ENCODE measurements at regions of chr21 and their contacts with region 1.

Region 1: DNA sequence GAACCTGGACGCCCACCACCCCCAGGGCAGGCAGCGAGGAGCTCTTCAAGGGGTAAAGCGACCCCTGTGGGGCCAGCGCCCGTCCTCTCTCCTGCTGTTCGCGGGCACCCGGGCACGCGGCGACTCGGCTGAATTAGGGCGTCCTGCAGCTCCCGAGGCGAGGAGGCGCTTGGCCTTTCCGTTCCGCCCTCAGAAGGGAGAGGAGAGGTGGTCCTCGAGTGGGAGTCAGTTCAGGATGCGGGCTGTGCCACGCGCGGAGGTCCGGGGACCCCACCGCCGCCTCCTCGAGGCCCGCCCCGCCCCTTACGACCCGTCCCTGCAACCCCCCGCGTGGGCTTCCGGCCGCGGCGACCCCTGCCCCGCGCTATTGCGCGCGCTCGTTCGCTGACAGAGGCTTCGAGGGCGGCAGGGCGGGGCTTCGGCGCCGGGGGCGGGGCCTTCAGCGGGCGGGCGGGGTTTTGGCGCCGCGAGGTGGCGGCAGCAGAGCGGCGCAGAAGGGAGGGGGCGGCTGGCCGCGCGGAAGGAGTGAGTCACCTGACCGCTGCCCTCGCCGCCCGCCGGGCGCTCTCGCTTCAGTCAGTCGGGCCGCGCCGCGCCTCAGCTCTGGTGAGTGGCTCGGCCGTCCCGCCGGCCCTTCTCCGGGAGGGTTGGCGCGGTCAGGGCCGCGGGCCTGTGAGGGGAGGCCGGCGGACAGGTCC is at the start of gene BACH1:
- DNase-seq: peak; percentile 83
- H3K4me3 ChIP-seq: peak within 1 kb of the TSS; percentile 57 to 78 (median 74)
- H3K27ac ChIP-seq: peak within 1 kb of the TSS; percentile 89
- H3K4me1 ChIP-seq: peaks cover 37% of the 10 kb centered on the region
- H3K27me3 ChIP-seq: no peaks in the 10 kb centered on the region
- CTCF ChIP-seq: peak; percentile 22 to 53
- total RNA-seq, gene BACH1: 38.8 to 45.7 TPM

Region 2: DNA sequence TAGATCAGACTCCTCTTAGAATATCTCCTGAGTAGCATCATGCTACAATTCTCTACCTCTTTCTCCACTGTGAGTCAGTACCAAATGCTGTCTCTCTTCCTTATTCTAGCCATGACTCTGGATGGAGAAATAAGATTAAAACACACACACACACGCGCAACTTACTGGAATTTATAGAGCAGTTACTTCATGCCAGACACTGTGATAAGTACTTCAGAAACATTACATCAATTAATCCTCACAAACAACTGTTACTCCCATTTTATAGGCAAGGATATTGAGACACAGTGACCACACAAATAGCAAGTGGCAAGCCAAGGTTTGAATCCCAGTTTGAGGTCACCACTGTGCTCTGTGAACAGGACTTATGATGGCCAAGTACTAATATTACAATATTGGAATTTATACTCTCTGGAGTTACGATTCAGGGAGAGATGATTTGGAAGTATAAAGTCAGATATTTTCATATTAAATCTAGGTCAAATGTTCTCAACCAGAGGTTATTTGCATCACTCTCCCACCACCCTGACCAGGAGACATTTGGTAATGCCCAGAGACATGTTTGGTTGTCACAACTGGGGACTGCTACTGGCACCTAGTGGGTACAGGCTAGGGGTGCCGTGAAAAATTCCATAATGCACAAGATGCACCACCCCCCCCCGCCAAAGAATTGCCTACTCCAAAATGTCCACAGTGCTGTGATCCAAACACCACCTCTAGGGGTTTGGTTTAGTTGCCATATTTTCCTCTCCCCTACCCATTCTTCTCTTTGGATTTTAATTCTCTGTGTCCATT is 527.4 kb before region 1 on chr21:
- CTCF ChIA-PET with region 1: no interaction called
- dilution Hi-C with region 1: no loop called
- in situ Hi-C with region 1: no loop called
- intact Hi-C with region 1: no loop called
- DNase-seq: no peak
- H3K4me3 ChIP-seq: no peak overlapping the region
- H3K27ac ChIP-seq: no peak overlapping the region
- H3K4me1 ChIP-seq: no peaks in the 10 kb centered on the region
- H3K27me3 ChIP-seq: no peaks in the 10 kb centered on the region
- CTCF ChIP-seq: no peak

Region 3: DNA sequence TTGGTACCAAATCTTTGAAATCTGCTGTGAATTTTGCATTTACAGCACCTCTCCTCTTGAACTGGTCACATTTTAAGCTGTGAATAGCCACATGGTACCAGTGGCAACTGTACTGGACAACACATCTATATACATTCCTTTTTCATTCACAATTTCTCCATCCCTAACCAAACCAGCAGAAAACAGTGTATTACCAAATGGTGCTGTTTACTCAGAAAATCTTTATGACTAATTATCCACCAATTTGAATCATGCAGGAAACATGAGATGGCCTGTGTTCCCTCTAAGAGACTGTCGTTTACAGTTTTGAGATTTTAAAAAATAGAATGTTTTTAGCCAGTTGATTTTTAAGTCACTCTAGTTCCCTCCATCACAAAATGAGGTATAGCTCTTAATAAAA is 207.5 kb before region 1 on chr21:
- CTCF ChIA-PET with region 1: no interaction called
- dilution Hi-C with region 1: no loop called
- in situ Hi-C with region 1: no loop called
- intact Hi-C with region 1: loop called (anchors 1 kb)
- DNase-seq: peak; percentile 68
- H3K4me3 ChIP-seq: no peak overlapping the region
- H3K27ac ChIP-seq: no peak overlapping the region
- H3K4me1 ChIP-seq: peaks cover 16% of the 10 kb centered on the region
- H3K27me3 ChIP-seq: no peaks in the 10 kb centered on the region
- CTCF ChIP-seq: no peak

Region 4: DNA sequence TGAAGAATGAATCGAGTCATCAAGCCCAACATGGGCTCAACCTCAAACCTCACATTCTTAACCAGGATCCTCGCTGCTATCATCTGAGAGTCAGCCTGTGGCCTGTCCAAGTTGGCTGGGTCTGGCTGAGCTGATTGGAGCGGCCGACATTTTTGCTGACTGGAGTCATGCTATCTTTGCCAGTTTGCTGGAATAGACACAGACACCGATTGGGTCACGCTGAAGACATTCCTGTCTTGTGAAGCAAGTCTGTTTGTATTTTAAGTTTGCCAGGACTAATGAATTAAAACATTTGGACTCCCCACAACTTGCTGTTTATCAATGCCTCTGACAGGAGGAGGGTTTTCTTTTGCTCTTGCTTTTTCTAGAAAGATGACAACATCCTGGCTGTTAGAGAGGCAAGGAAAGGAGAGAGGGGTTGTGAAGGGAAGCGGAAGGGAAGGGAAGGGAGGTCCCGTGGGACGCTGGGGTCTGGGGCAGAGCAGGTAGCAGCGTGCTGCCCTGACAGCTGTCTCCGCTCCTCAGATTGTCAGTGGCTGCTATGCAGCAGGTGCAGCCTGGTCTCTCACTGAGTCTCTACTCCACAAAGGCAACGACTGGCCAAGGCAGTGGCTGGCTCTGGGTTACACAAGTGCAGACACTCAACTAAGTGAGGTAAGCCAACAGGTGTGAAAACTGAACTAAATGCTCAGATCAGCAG is 168.1 kb before region 1 on chr21 and contains the start of gene MAP3K7CL:
- CTCF ChIA-PET with region 1: no interaction called
- dilution Hi-C with region 1: no loop called
- in situ Hi-C with region 1: no loop called
- intact Hi-C with region 1: no loop called
- DNase-seq: peak; percentile 94
- H3K4me3 ChIP-seq: no peak within 1 kb of the TSS
- H3K27ac ChIP-seq: peak within 1 kb of the TSS; percentile 46
- H3K4me1 ChIP-seq: peaks cover 18% of the 10 kb centered on the region
- H3K27me3 ChIP-seq: no peaks in the 10 kb centered on the region
- CTCF ChIP-seq: no peak
- total RNA-seq, gene MAP3K7CL: 6.0 to 7.7 TPM

Region 5: DNA sequence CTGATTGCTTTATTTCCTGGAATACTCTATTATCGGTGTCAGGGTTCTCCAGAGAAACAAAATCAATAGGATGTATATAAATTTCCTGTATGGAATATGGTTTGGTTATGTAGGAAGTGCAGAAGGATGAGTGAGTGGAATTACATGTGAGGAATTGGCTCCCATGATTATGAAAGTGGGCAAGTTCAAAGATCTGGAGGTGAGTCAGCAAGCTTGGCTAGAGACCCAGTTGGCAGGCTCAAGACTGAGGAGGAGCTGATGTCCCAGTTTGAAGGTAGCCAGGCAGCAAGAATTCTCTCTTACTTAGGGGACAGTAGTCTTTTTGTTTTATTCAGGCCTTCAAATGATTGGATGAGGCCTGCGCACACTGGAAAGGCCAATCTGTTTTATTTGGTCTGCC is 110.6 kb before region 1 on chr21:
- CTCF ChIA-PET with region 1: no interaction called
- dilution Hi-C with region 1: loop called (anchors 5 kb)
- in situ Hi-C with region 1: no loop called
- intact Hi-C with region 1: no loop called
- DNase-seq: peak; percentile 84
- H3K4me3 ChIP-seq: no peak overlapping the region
- H3K27ac ChIP-seq: peak overlapping the region; percentile 59
- H3K4me1 ChIP-seq: peaks cover 39% of the 10 kb centered on the region
- H3K27me3 ChIP-seq: no peaks in the 10 kb centered on the region
- CTCF ChIP-seq: no peak

Region 6: GRCh38 chr21:29208682-29209059 is 89.8 kb before region 1 on chr21:
- CTCF ChIA-PET with region 1: no interaction called
- dilution Hi-C with region 1: no loop called
- in situ Hi-C with region 1: no loop called
- intact Hi-C with region 1: no loop called
- DNase-seq: no peak
- H3K4me3 ChIP-seq: no peak overlapping the region
- H3K27ac ChIP-seq: no peak overlapping the region
- H3K4me1 ChIP-seq: no peaks in the 10 kb centered on the region
- H3K27me3 ChIP-seq: no peaks in the 10 kb centered on the region
- CTCF ChIP-seq: no peak

Region 7: GRCh38 chr21:29258626-29259335 is 39.7 kb before region 1 on chr21:
- CTCF ChIA-PET with region 1: interaction called, 5 read pairs
- dilution Hi-C with region 1: no loop called
- in situ Hi-C with region 1: no loop called
- intact Hi-C with region 1: loop called (anchors 2 kb)
- DNase-seq: peak; percentile 77
- H3K4me3 ChIP-seq: no peak overlapping the region
- H3K27ac ChIP-seq: peak overlapping the region; percentile 98
- H3K4me1 ChIP-seq: peaks cover 50% of the 10 kb centered on the region
- H3K27me3 ChIP-seq: no peaks in the 10 kb centered on the region
- CTCF ChIP-seq: no peak

Region 8: DNA sequence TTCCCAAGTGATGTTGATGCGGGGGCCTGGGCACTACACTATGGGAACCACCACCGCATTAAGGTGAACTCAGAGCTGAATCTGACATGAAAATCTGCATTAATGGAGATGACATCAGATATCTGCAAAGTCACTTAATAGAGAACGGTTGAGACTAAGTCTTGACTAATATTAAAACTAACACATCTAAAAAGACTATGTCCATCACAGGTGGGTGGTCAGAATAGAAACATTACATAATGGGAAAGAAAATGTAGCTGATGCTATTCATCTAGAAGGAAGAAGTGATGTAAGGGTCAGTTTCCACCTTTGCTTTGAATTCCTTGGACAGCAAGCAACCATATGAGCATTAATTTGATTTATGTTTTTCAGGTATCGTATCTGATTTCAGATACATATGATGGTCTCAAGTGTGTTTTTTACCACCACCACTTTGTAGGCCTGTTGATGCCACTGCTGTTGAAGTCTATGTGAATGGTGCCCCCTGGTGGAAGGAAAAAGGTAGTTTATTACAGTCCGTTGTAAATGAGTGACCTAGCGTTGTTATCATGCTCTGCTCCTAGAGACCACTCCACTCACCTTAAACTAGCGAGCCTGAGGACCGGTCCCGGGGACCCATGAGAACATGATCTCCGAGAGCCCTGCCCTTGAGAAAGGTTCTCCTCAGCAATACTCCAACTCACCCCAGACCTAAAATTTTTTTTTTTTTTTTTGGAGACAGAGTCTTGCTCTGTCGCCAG is 73.7 kb after region 1 on chr21:
- CTCF ChIA-PET with region 1: no interaction called
- dilution Hi-C with region 1: no loop called
- in situ Hi-C with region 1: no loop called
- intact Hi-C with region 1: loop called (anchors 5 kb)
- DNase-seq: peak; percentile 52
- H3K4me3 ChIP-seq: no peak overlapping the region
- H3K27ac ChIP-seq: no peak overlapping the region
- H3K4me1 ChIP-seq: no peaks in the 10 kb centered on the region
- H3K27me3 ChIP-seq: no peaks in the 10 kb centered on the region
- CTCF ChIP-seq: peak; percentile 56 to 72

Region 9: DNA sequence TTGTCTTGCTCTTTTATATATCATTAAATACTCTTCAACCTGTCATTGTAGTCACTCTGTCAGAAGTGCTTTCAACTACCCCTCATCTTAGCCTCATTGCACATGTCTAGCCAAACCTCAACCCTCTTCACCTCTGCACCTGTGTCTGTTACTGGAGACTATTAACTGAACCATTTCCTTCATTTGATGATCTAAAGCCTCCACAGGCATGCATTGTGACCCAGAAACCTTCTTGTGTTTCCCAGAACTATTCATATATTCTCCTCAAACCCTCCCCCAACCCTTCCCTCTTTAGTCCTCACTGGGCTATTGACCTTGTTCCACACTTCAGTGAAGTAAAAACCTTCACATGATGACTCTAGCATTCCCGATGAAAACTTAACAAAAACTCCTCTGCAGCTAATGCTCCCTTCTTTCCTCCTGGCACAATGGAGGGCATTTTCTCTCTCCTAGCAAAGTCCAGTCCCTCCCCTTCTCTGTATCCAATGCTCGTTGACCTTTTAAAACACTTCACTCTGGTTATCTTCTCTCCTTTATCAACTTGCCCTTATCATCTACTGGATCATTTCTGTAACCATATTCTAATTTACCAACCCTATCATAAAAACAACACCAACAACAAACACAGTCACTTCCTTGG is 86.3 kb after region 1 on chr21:
- CTCF ChIA-PET with region 1: no interaction called
- dilution Hi-C with region 1: no loop called
- in situ Hi-C with region 1: no loop called
- intact Hi-C with region 1: no loop called
- DNase-seq: no peak
- H3K4me3 ChIP-seq: no peak overlapping the region
- H3K27ac ChIP-seq: no peak overlapping the region
- H3K4me1 ChIP-seq: peaks cover 13% of the 10 kb centered on the region
- H3K27me3 ChIP-seq: no peaks in the 10 kb centered on the region
- CTCF ChIP-seq: no peak

Measured in mammary epithelial cell (primary cell).